A673 (cell line): ENCODE measurements at regions of chr7 and their contacts with region 1.

Region 1: DNA sequence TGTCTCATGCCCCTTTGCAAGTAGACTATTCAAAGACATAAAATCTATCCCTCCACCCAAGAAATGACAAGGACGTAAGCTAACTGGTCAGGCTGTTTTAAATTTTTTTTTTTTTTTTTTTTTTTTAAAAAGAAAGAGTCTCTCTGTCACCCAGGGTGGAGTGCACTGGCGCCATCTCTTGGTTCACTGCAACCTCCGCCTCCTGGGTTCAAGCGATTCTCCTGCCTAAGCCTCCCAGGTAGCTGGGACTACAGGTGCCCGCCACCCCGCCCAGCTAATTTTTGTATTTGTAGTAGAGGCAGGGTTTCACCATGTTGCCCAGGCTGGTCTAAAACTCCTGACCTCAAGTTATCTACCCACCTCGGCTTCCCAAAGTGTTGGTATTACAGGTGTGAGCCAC is 11.2 kb downstream of the TRA2A start:
- DNase-seq: no peak
- H3K4me3 ChIP-seq: no peak overlapping the region
- H3K27ac ChIP-seq: no peak overlapping the region
- H3K4me1 ChIP-seq: peaks cover 17% of the 10 kb centered on the region
- H3K27me3 ChIP-seq: no peaks in the 10 kb centered on the region
- CTCF ChIP-seq: peak; percentile 48

Region 2: DNA sequence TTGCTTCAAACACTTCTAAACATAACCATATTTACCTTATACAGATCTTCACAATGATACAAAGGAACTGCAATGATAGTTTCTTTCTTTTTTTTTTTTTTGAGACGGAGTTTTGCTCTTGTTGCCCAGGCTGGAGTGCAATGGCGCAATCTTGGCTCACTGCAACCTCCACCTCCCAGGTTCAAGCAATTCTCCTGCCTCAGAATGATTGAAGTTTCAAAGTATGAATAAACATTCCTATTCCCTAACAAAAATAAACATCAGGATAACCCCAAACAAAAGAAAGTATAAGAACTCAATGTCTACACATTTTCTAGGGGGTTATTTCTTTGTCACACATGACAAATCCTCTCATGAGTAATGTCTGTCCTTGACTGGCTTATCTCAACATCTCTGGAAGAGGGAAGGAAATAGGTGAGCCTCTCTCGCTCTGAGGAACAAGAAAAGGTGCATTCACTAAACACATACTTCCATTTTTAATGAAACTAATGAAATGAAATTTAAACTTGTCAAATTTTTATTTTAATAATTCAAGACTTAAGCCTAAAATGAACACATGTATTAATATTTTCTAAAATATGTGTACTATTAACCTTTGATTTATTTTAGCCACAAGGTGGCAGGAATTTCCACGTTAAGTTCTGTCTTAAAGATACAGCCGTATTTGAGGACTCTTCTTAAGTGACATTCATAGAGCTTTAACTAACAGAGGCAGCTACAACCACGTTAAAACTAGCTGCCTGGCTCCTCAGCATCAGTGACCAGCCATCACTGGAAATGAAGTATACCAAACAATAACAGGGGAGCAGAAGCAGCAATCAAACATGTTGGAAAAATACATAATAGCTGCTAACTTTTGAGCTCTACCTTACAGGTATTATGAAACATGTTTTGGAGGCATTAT is 163.1 kb before region 1 on chr7:
- CTCF ChIA-PET with region 1: interaction called, 3 read pairs
- POLR2A ChIA-PET with region 1: no interaction called
- intact Hi-C with region 1: loop called (anchors 5 kb)
- DNase-seq: peak; percentile 54
- H3K4me3 ChIP-seq: no peak overlapping the region
- H3K27ac ChIP-seq: no peak overlapping the region
- H3K4me1 ChIP-seq: peaks cover 4% of the 10 kb centered on the region
- H3K27me3 ChIP-seq: no peaks in the 10 kb centered on the region
- CTCF ChIP-seq: peak; percentile 60